RWPE1 (cell line): ENCODE measurements at regions of chr10 and their contacts with region 1.

Region 1: GRCh38 chr10:52308251-52309031 is 5.6 kb upstream of the DKK1 start:
- DNase-seq: peak; percentile 73
- H3K27ac ChIP-seq: no peak overlapping the region
- CTCF ChIP-seq: peak; percentile 80

Region 2: DNA sequence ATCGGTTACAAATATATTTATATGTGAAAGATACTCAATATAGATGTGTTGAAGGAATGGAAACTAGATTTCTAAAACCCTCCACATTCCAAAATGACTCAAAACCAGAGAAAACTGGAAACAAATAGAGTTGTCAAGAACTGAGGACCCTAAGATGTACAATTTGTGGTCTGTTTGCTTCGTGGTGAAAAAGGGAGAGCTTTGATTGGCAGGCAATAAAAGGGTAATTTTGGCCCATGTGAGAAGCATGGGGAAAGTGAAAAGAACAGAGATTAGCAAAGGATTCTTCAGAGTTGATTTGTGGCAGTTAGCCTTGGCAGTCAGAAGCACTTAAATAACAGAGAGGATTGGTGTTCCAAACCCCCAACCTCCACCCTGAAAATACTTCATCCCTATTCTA is 31.5 kb before region 1 on chr10:
- CTCF ChIA-PET with region 1: no interaction called
- POLR2A ChIA-PET with region 1: no interaction called
- DNase-seq: no peak
- H3K27ac ChIP-seq: no peak overlapping the region
- CTCF ChIP-seq: no peak

Region 3: GRCh38 chr10:52287866-52288265 is 20.6 kb before region 1 on chr10:
- CTCF ChIA-PET with region 1: no interaction called
- POLR2A ChIA-PET with region 1: no interaction called
- DNase-seq: no peak
- H3K27ac ChIP-seq: no peak overlapping the region
- CTCF ChIP-seq: no peak

Region 4: GRCh38 chr10:52488606-52489485 is 180.4 kb after region 1 on chr10:
- CTCF ChIA-PET with region 1: interaction called, 22 read pairs
- POLR2A ChIA-PET with region 1: no interaction called
- DNase-seq: peak; percentile 25
- H3K27ac ChIP-seq: no peak overlapping the region
- CTCF ChIP-seq: peak; percentile 64

Region 5: DNA sequence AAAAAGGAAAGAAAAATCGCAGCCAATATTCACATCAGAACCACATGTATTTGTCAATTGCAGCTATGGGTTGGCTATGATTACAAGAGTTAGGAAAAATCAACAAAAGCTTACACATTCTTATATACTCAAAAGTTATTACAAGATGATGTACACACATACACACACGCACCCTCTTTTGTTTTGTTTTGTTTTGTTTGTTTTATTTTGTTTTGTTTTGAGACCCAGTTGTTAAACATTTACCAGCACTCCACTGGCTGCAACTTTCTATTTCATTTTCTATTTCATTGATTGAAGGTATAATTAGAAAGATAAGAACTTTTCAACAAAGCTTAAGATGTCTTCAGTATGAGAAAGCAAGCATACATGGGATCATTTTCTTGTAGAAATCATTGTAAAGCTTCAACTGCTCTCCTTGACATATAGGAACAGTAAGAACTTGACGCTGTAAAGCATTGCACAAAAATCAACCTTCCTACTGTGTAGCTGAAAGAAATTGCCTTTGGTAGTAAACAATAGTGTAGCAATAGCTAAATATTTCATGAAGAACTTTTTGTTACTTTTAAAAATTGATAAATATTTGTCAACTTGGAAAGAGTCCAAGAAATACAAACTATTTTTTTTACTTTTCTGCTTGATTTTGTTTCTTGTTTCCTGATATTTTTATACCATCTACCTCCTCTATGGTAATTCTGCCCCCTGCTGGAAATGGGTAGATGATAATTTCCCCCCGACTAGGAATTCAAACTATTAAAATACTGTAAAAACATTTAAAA is 258.2 kb after region 1 on chr10:
- CTCF ChIA-PET with region 1: interaction called, 40 read pairs
- POLR2A ChIA-PET with region 1: no interaction called
- DNase-seq: peak; percentile 40
- H3K27ac ChIP-seq: no peak overlapping the region
- CTCF ChIP-seq: peak; percentile 32